WTC11 (cell line): ENCODE measurements at regions of chr16 and their contacts with region 1.

Region 1: GRCh38 chr16:50593410-50594150 is 45.4 kb downstream of the NKD1 start:
- DNase-seq: peak; percentile 71
- ATAC-seq: peak; percentile 88
- H3K4me3 Mint-ChIP-seq: no peak overlapping the region
- H3K27ac Mint-ChIP-seq: peak overlapping the region; percentile 74; the same call in 1 of the 2 replicates
- H3K4me1 Mint-ChIP-seq: peaks cover 28% of the 10 kb centered on the region
- H3K27me3 Mint-ChIP-seq: no peaks in the 10 kb centered on the region
- CTCF ChIP-seq: 0 out of 2 replicates have a peak, but pooled peaks have one; percentile 19

Region 2: DNA sequence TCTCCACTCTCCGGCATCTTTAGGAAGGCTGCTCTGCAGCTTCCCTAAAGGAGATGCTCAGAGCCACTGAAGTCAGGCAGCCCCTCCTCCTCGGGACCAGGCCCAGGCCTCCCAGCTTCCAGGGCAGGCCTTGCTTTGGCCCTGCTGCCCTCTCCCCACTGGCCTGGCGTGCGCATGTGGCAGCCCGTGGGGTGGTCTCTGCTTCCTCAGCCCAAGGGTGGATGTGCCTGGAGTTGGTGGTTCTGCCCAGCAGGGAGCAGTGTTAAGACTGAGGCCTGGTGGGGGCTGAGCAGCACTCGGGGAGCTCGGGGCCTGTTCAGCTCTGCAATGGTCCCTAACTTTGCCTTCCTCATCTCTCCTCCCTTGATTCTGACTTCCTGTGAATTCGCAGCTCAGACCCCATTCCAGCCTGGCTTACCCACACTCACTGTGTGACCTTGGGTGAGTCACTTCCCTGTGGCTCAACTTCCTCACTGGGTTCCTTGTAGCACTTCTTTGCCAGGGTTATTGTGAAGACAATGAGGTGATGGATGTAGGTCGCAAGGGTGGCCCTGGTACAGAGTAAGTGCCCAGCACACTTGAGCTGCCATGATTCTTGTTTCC is 17.9 kb after region 1 on chr16:
- CTCF ChIA-PET with region 1: interaction called, 75 read pairs
- POLR2A ChIA-PET with region 1: no interaction called
- DNase-seq: no peak
- ATAC-seq: no peak
- H3K4me3 Mint-ChIP-seq: no peak overlapping the region
- H3K27ac Mint-ChIP-seq: no peak overlapping the region
- H3K4me1 Mint-ChIP-seq: peaks cover 27% of the 10 kb centered on the region
- H3K27me3 Mint-ChIP-seq: no peaks in the 10 kb centered on the region
- CTCF ChIP-seq: no peak

Region 3: GRCh38 chr16:50635505-50636392 is 42.2 kb after region 1 on chr16:
- CTCF ChIA-PET with region 1: interaction called, 11 read pairs
- POLR2A ChIA-PET with region 1: no interaction called
- DNase-seq: peak; percentile 35
- ATAC-seq: peak; percentile 83
- H3K4me3 Mint-ChIP-seq: no peak overlapping the region
- H3K27ac Mint-ChIP-seq: no peak overlapping the region
- H3K4me1 Mint-ChIP-seq: no peaks in the 10 kb centered on the region
- H3K27me3 Mint-ChIP-seq: no peaks in the 10 kb centered on the region
- CTCF ChIP-seq: no peak

Region 4: GRCh38 chr16:50657241-50657640 is 63.7 kb after region 1 on chr16:
- CTCF ChIA-PET with region 1: interaction called, 14 read pairs
- POLR2A ChIA-PET with region 1: no interaction called
- DNase-seq: no peak
- ATAC-seq: no peak
- H3K4me3 Mint-ChIP-seq: no peak overlapping the region
- H3K27ac Mint-ChIP-seq: no peak overlapping the region
- H3K4me1 Mint-ChIP-seq: no peaks in the 10 kb centered on the region
- H3K27me3 Mint-ChIP-seq: no peaks in the 10 kb centered on the region; the same call in 1 of the 2 replicates
- CTCF ChIP-seq: no peak